H1 (cell line): ENCODE measurements at regions of chr3 and their contacts with region 1.

Region 1: DNA sequence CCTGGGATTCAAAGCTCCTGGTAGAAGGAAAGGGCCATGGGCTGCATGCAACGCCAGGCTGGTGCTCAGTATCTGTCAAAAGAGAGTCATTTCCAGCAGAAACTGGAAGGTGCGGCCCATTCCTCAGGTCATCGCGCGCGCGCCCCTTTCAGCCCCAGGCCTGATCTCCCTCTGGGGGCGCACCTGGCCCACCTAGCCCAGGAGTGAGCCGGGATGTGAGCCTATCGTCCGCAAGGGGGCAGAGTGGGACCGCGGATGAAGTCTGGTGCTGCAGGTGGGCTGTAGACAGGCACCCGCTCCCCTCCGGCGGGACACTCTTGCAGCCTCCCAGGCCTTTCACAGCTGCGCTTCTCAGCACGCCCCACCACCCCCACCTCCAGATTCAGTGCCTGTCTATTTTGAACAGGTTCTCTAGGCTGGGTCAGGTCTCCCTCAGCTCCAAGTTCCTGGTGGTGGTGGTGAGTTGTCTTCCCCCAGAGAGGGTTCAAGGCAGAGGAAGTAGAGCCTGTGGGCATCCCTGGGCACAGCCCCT is 5.8 kb upstream of the RPL29 start:
- DNase-seq: peak; percentile 87 to 98
- H3K4me3 ChIP-seq: no peak overlapping the region
- H3K27ac ChIP-seq: no peak overlapping the region
- H3K4me1 ChIP-seq: peaks cover 11 to 46% (median 29%) of the 10 kb centered on the region in 4 experiments
- H3K27me3 ChIP-seq: no peaks in the 10 kb centered on the region; a peak in 2 of 7 replicates
- CTCF ChIP-seq: peak in 2 of 3 experiments; percentile 99 to 100; a peak in 3 of 4 replicates
- EP300 ChIP-seq: peak in 1 of 2 experiments; percentile 62; a peak in 1 of 3 replicates
- POLR2A ChIP-seq: no peak
- RAD21 ChIP-seq: peak; percentile 99

Region 2: GRCh38 chr3:51982782-51983577 is 18.5 kb before region 1 on chr3 and contains the start of gene ACY1:
- CTCF ChIA-PET with region 1: interaction called, 27 read pairs
- POLR2A ChIA-PET with region 1: interaction called, 923 read pairs
- DNase-seq: peak in 1 of 2 experiments; percentile 89
- H3K4me3 ChIP-seq: peak within 1 kb of the TSS; percentile 53 to 63 (median 56)
- H3K27ac ChIP-seq: peak within 1 kb of the TSS; percentile 45; the same call in 1 of the 2 replicates
- H3K4me1 ChIP-seq: peaks cover 0 to 12% (median 9%) of the 10 kb centered on the region in 4 experiments; a peak in 6 of 7 replicates
- H3K27me3 ChIP-seq: no peaks in the 10 kb centered on the region
- CTCF ChIP-seq: no peak
- EP300 ChIP-seq: no peak
- POLR2A ChIP-seq: peak in 1 of 2 experiments; percentile 86; a peak in 2 of 3 replicates
- RAD21 ChIP-seq: no peak
- total RNA-seq, gene ACY1: 45.5 and 48.3 TPM in 2 replicates

Region 3: DNA sequence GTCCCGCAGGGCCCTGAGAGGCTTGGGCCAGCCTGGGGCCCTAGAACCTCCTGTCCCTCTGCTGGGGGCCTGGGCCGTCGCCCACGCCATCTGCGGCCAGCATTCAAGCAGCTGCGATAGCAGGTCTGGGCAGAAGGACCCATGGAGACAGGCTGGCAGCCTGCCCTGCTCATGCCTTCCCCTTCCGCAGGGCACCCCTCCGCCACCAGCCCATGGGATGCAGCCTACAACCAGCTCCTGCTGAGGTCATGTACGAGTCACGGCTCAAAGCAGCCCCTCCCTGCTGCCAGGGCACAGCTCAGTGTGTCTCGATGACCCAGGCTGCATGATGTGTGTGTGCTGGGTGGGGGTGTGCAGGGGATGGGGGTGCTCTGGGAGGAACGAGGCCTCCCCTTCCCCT is 27.1 kb after region 1 on chr3:
- CTCF ChIA-PET with region 1: interaction called, 171 read pairs
- POLR2A ChIA-PET with region 1: interaction called, 3 read pairs
- DNase-seq: no peak
- H3K4me3 ChIP-seq: no peak overlapping the region
- H3K27ac ChIP-seq: no peak overlapping the region
- H3K4me1 ChIP-seq: peaks cover 0 to 2% (median 0%) of the 10 kb centered on the region in 4 experiments; a peak in 2 of 7 replicates
- H3K27me3 ChIP-seq: no peaks in the 10 kb centered on the region
- CTCF ChIP-seq: no peak
- EP300 ChIP-seq: no peak
- POLR2A ChIP-seq: no peak
- RAD21 ChIP-seq: no peak

Region 4: GRCh38 chr3:52099001-52099401 is 97.5 kb after region 1 on chr3:
- CTCF ChIA-PET with region 1: interaction called, 35 read pairs
- POLR2A ChIA-PET with region 1: no interaction called
- DNase-seq: no peak
- H3K4me3 ChIP-seq: no peak overlapping the region
- H3K27ac ChIP-seq: no peak overlapping the region
- H3K4me1 ChIP-seq: no peaks in the 10 kb centered on the region
- H3K27me3 ChIP-seq: no peaks in the 10 kb centered on the region
- CTCF ChIP-seq: no peak
- EP300 ChIP-seq: no peak
- POLR2A ChIP-seq: no peak
- RAD21 ChIP-seq: no peak

Region 5: GRCh38 chr3:52123106-52123725 is 121.7 kb after region 1 on chr3:
- CTCF ChIA-PET with region 1: interaction called, 132 read pairs
- POLR2A ChIA-PET with region 1: interaction called, 3 read pairs
- DNase-seq: peak; percentile 33 to 92
- H3K4me3 ChIP-seq: no peak overlapping the region
- H3K27ac ChIP-seq: no peak overlapping the region
- H3K4me1 ChIP-seq: no peaks in the 10 kb centered on the region
- H3K27me3 ChIP-seq: no peaks in the 10 kb centered on the region
- CTCF ChIP-seq: peak; percentile 95 to 100 (median 100)
- EP300 ChIP-seq: no peak
- POLR2A ChIP-seq: no peak
- RAD21 ChIP-seq: peak; percentile 92 to 93

Region 6: DNA sequence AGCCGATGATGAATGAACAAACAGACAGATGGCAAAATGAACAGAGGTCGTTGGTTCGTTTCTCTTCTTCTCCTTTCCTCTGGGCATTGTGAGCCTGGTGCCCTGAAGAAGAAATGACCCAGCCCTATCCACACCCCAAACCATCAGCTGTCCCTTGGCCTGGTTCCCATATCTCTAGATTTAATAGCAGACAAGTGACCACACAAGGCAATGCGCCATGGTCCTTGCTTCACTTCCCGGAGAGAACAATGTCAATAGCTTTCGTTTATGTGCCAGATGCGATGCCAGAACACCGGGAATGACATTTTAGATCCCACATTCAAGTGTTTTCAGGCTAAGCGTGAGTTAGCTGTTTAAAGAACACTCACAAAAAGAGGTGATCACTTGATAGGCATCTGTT is 135.0 kb after region 1 on chr3:
- CTCF ChIA-PET with region 1: interaction called, 146 read pairs
- POLR2A ChIA-PET with region 1: interaction called, 4 read pairs
- DNase-seq: no peak
- H3K4me3 ChIP-seq: no peak overlapping the region
- H3K27ac ChIP-seq: no peak overlapping the region
- H3K4me1 ChIP-seq: no peaks in the 10 kb centered on the region
- H3K27me3 ChIP-seq: no peaks in the 10 kb centered on the region
- CTCF ChIP-seq: no peak
- EP300 ChIP-seq: no peak
- POLR2A ChIP-seq: no peak
- RAD21 ChIP-seq: no peak

Region 7: GRCh38 chr3:52171514-52172261 is 170.2 kb after region 1 on chr3:
- CTCF ChIA-PET with region 1: interaction called, 11 read pairs
- POLR2A ChIA-PET with region 1: no interaction called
- DNase-seq: no peak
- H3K4me3 ChIP-seq: no peak overlapping the region
- H3K27ac ChIP-seq: no peak overlapping the region
- H3K4me1 ChIP-seq: peaks cover 5 to 7% (median 7%) of the 10 kb centered on the region in 4 experiments; a peak in 5 of 7 replicates
- H3K27me3 ChIP-seq: no peaks in the 10 kb centered on the region; a peak in 2 of 7 replicates
- CTCF ChIP-seq: no peak
- EP300 ChIP-seq: no peak
- POLR2A ChIP-seq: no peak
- RAD21 ChIP-seq: no peak